ENCODE measurements at regions of chr2 and their contacts with region 1.

Region 1: GRCh38 chr2:27050281-27050995 is 1.0 kb upstream of the AGBL5 start:
- DNase-seq: peak; percentile 91 to 98
- H3K4me3 ChIP-seq: peak overlapping the region; percentile 80 to 88 (median 87)
- H3K27ac ChIP-seq: peak overlapping the region; percentile 64; the same call in 1 of the 2 replicates
- H3K4me1 ChIP-seq: no peaks in the 10 kb centered on the region; a peak in 4 of 7 replicates
- H3K27me3 ChIP-seq: no peaks in the 10 kb centered on the region
- CTCF ChIP-seq: peak in 2 of 3 experiments; percentile 11 to 12; a peak in 2 of 4 replicates
- EP300 ChIP-seq: no peak
- POLR2A ChIP-seq: peak in 1 of 2 experiments; percentile 73; a peak in 2 of 3 replicates
- RAD21 ChIP-seq: no peak; a peak in 1 of 4 replicates

Region 2: GRCh38 chr2:27032495-27033252 is 17.8 kb before region 1 on chr2 and contains the start of gene TMEM214:
- CTCF ChIA-PET with region 1: interaction called, 5 read pairs
- POLR2A ChIA-PET with region 1: interaction called, 42 read pairs
- DNase-seq: peak; percentile 39 to 89
- H3K4me3 ChIP-seq: peak within 1 kb of the TSS; percentile 80 to 93 (median 84)
- H3K27ac ChIP-seq: 0 out of 2 replicates have a peak within 1 kb of the TSS, but pooled peaks have one; percentile 7
- H3K4me1 ChIP-seq: peaks cover 0 to 6% (median 0%) of the 10 kb centered on the region in 4 experiments; a peak in 3 of 7 replicates
- H3K27me3 ChIP-seq: no peaks in the 10 kb centered on the region
- CTCF ChIP-seq: peak in 1 of 3 experiments; percentile 15; a peak in 1 of 4 replicates
- EP300 ChIP-seq: no peak
- POLR2A ChIP-seq: peak in 1 of 2 experiments; percentile 76; a peak in 2 of 3 replicates
- RAD21 ChIP-seq: no peak
- total RNA-seq, gene TMEM214: 49.7 and 52.7 TPM in 2 replicates

Region 3: GRCh38 chr2:27071277-27071989 is 21.0 kb after region 1 on chr2 and contains the start of gene OST4:
- CTCF ChIA-PET with region 1: interaction called, 160 read pairs
- POLR2A ChIA-PET with region 1: interaction called, 441 read pairs
- DNase-seq: peak; percentile 58 to 94
- H3K4me3 ChIP-seq: peak within 1 kb of the TSS; percentile 82 to 99 (median 93)
- H3K27ac ChIP-seq: peak within 1 kb of the TSS; percentile 71; the same call in 1 of the 2 replicates
- H3K4me1 ChIP-seq: peaks cover 0 to 7% (median 4%) of the 10 kb centered on the region in 4 experiments; a peak in 5 of 7 replicates
- H3K27me3 ChIP-seq: 0 out of 7 replicates have a peak, but pooled peaks cover 0 to 3% (median 0%) of the 10 kb centered on the region in 4 experiments
- CTCF ChIP-seq: no peak
- EP300 ChIP-seq: no peak
- POLR2A ChIP-seq: peak in 1 of 2 experiments; percentile 76; a peak in 1 of 3 replicates
- RAD21 ChIP-seq: no peak
- total RNA-seq, gene OST4: 212 and 225 TPM in 2 replicates

Region 4: DNA sequence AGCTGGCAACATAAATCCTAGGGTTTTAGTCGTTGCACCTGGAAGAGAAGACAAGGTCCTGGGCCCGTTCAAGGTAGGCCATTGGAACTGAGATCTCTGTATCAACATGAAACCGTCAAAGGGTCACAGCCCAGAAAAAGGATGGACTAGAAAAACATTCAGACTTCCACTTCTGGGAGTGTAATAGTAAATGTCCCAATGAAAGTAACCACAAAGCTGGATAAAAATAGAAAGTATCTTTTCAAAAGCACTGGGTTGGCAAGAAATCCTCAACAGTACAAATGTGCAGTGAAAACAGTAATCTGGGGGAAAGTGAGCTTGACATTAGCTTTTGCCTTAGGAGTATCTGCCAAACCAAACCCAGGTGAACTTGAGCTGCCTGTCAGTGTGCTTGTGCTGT is 55.5 kb after region 1 on chr2:
- CTCF ChIA-PET with region 1: no interaction called
- POLR2A ChIA-PET with region 1: no interaction called
- DNase-seq: no peak
- H3K4me3 ChIP-seq: no peak overlapping the region
- H3K27ac ChIP-seq: no peak overlapping the region
- H3K4me1 ChIP-seq: no peaks in the 10 kb centered on the region; a peak in 1 of 7 replicates
- H3K27me3 ChIP-seq: no peaks in the 10 kb centered on the region; a peak in 1 of 7 replicates
- CTCF ChIP-seq: no peak
- EP300 ChIP-seq: no peak
- POLR2A ChIP-seq: no peak
- RAD21 ChIP-seq: no peak

Measured in H1 (cell line).